Posterior vena cava (tissue), 2 donors: ENCODE measurements at regions of chr20 and their contacts with region 1.

Region 1: GRCh38 chr20:9051508-9051907 is 17.4 kb upstream of the PLCB4 start:
- DNase-seq: no peak

Region 2: GRCh38 chr20:8946036-8946940 is 105.2 kb before region 1 on chr20:
- intact Hi-C with region 1: loop called in 1 of 2 experiments (anchors 10 kb)
- DNase-seq: no peak

Region 3: DNA sequence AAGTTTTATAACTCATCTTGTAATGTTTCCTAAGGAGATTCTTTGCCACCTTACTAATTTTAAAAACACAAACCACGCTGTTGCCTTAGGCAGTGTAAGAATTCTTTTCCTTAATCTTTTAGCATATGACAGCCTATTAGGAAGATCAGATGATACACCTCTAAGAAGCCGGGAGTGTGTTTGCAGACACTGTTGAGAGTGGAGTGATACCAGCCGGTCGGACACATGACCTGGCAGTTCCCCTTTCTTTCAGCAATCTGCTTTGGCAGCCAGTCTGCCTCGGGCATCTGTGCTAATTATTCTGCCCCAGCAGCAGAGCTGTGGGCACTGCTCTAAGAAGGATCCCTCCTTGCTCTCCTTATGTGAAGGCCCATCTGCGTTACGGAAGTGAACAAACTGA is 68.3 kb after region 1 on chr20:
- intact Hi-C with region 1: no loop called
- DNase-seq: no peak

Region 4: GRCh38 chr20:10747019-10747418 is 1695.5 kb after region 1 on chr20:
- intact Hi-C with region 1: loop called in 1 of 2 experiments (anchors 5 kb)
- DNase-seq: no peak